ENCODE measurements at regions of chr1 and their contacts with region 1.

Region 1: DNA sequence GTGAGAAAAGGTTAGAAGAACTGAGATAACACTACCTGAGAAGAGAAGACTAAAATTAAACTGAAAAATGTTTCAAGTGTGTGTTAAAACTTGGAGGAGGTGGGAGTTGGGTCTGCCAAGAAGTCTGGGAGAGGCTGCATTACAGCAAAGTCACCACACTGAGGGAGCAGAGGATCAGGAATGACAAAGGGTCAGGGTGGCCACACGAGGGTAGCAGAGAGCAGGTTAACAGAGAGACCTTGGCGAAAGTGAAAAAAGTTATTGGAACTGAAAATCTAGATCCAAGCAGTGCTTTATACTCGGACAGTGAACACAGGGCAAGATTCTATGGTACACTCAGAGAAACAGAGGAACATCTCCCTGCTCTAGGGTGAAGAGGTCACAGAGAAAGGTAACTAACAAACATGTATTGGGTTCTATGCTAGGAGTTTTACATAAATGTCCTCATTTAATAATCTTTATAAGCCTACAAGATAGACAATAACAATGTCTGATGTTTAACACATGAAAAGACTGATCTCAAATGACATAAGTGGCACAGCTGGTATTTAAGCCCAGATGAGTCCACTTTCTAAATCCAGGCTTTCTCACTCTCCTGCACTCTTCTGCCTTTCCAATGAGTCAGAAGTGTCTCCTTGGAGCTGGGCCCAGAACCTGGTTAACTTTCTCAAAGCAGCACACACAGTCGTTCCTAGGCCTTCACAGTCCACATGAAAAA is 10.3 kb upstream of the CADM3 start:
- DNase-seq: peak; percentile 64 to 73 (median 67)
- ATAC-seq: peak; percentile 96 to 99 (median 98)
- H3K4me3 ChIP-seq: no peak overlapping the region
- H3K27ac ChIP-seq: peak overlapping the region in 2 of 12 donors; percentile 50 to 58
- H3K4me1 ChIP-seq: peaks cover 0 to 7% (median 0%) of the 10 kb centered on the region in 12 donors
- H3K27me3 ChIP-seq: peaks cover 0 to 28% (median 0%) of the 10 kb centered on the region in 9 donors
- CTCF ChIP-seq: peak; percentile 81 to 97 (median 91)
- POLR2A ChIP-seq: no peak

Region 2: GRCh38 chr1:158833264-158833663 is 327.9 kb before region 1 on chr1:
- intact Hi-C with region 1: no loop called
- DNase-seq: no peak
- ATAC-seq: no peak
- H3K4me3 ChIP-seq: peak overlapping the region in 4 of 12 donors; percentile 25 to 56 (median 34)
- H3K27ac ChIP-seq: peak overlapping the region in 1 of 12 donors; percentile 90
- H3K4me1 ChIP-seq: peaks cover 0 to 19% (median 0%) of the 10 kb centered on the region in 12 donors
- H3K27me3 ChIP-seq: no peaks in the 10 kb centered on the region
- CTCF ChIP-seq: no peak
- POLR2A ChIP-seq: no peak

Region 3: DNA sequence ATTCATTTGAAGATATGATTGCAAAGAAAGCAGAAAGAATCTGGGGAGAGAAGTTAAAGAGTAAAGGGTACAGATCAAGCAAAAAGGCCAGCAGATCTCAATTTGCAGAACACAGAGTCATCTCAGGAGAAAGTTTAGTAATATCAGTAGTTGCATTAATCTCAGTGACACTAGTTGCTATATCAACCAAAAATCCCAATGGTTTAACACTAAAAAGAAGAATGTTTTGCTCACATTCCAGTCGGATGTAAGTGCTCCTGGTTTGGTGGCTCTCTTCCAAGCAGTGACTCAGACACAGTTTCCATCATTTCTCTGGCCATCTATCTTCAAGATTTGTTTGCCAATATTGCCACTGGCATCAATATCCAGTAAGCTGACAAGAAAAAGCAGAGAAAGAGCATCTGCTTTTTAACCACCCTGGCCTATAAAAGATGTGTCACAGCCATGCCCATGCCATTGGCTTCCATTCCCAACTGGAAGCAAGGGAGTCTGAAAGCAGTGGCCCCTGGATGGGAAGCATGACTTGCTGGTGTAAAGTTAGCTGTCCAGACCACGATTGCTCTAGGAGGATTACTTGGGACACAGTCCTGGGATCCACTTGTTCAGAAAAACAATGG is 39.0 kb before region 1 on chr1:
- intact Hi-C with region 1: no loop called
- DNase-seq: no peak
- ATAC-seq: no peak
- H3K4me3 ChIP-seq: no peak overlapping the region
- H3K27ac ChIP-seq: no peak overlapping the region
- H3K4me1 ChIP-seq: no peaks in the 10 kb centered on the region
- H3K27me3 ChIP-seq: peaks cover 0 to 11% (median 0%) of the 10 kb centered on the region in 9 donors
- CTCF ChIP-seq: no peak
- POLR2A ChIP-seq: no peak

Region 4: GRCh38 chr1:159197561-159198557 is 36.7 kb after region 1 on chr1:
- intact Hi-C with region 1: loop called in 8 of 10 experiments (anchors 1 to 5 kb)
- DNase-seq: peak in 4 of 5 donors; percentile 37 to 60 (median 47)
- ATAC-seq: peak in 3 of 4 donors; percentile 67 to 73 (median 68)
- H3K4me3 ChIP-seq: no peak overlapping the region
- H3K27ac ChIP-seq: no peak overlapping the region
- H3K4me1 ChIP-seq: no peaks in the 10 kb centered on the region
- H3K27me3 ChIP-seq: peaks cover 0 to 37% (median 2%) of the 10 kb centered on the region in 9 donors
- CTCF ChIP-seq: peak; percentile 61 to 81 (median 74)
- POLR2A ChIP-seq: no peak

Region 5: GRCh38 chr1:159214149-159214760 is 53.1 kb after region 1 on chr1:
- intact Hi-C with region 1: loop called (anchors 1 to 5 kb)
- DNase-seq: no peak
- ATAC-seq: peak in 3 of 4 donors; percentile 45 to 72 (median 61)
- H3K4me3 ChIP-seq: no peak overlapping the region
- H3K27ac ChIP-seq: no peak overlapping the region
- H3K4me1 ChIP-seq: peaks cover 0 to 6% (median 0%) of the 10 kb centered on the region in 12 donors
- H3K27me3 ChIP-seq: peaks cover 0 to 44% (median 8%) of the 10 kb centered on the region in 9 donors
- CTCF ChIP-seq: peak; percentile 82 to 95 (median 87)
- POLR2A ChIP-seq: no peak